HEK293 (cell line): ENCODE measurements at regions of chr1 and their contacts with region 1.

Region 1: GRCh38 chr1:40247655-40248054 is at the start of gene TMCO2:
- H3K4me3 ChIP-seq: no peak within 1 kb of the TSS
- H3K27ac ChIP-seq: no peak within 1 kb of the TSS
- H3K4me1 ChIP-seq: no peaks in the 10 kb centered on the region
- CTCF ChIP-seq: no peak

Region 2: DNA sequence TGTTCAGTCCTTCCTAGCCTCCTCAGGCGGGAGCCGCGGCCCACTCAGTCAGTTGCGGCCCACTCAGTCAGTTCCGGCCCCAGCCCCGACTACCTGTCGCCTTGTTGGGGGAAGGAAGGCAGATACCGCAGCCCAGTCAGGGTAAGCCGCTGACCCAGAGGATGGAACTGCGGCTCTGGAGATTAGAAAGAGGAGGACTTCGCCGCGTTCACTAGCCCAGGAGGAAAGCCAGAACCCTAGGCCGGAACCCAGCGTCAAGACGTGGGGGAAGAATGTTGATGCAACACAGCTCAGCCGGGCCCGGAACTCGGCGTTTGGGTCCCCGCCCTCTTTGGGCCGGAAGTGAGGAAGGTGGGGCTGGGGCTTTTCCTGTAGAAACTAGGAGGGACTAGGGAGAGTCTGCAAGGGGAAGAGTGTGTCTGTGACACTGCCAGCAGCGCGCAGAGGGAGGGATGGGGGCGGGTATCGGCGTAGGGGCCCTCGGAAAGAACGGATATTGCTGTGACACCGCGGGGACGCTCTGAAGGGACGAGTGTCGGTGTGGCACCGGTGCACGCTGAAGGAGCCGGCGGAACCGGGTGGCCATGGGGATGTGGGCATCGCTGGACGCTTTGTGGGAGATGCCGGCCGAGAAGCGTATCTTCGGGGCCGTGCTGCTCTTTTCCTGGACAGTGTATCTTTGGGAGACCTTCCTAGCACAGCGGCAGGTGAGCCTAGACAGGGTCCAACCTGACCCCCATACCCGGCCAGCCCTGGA is 10.2 kb after region 1 on chr1 and contains the start of gene ZMPSTE24:
- CTCF ChIA-PET with region 1: interaction called, 3 read pairs
- POLR2A ChIA-PET with region 1: interaction called, 13 read pairs
- H3K4me3 ChIP-seq: peak within 1 kb of the TSS; percentile 89
- H3K27ac ChIP-seq: peak within 1 kb of the TSS; percentile 85
- H3K4me1 ChIP-seq: no peaks in the 10 kb centered on the region
- CTCF ChIP-seq: peak; percentile 67